ENCODE measurements at regions of chr3 and their contacts with region 1.

Region 1: DNA sequence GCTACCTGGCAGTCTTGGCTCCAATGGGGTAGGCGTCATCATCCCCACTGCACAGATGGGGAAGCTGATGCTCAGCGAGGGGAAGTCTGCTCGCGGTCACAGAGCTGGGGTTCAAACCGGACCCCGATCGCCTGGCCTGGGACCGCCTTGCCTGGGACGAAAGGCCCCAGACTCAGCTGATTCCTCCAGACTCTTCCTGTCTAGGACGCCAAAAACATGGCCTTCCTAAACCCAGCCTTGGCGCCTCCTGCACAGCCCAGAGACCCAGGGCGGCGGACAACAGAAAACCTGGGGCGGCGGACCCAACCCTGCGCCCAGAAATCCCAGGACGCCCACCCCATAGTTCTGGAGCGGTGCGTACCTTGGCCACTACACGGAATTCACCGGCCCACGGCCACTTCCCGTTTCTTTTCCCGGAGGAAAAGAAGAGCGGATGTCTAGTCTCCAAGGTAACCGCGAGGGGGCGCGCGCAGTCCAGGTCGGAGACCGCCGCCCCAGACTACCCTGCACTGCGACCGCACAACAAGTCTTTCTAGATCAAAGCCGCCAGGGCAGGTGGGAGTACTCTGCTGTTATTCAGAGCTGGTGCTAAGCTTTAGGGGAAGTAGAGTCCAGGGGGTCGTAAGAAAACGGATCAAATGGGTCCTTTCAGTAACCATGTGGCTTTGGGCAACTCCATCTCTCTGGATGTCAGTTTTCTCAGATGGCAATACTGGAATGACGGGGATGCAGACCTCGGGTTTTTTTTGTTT is 4.9 kb upstream of the IL17RD start:
- DNase-seq: peak; percentile 87
- H3K4me3 ChIP-seq: peak overlapping the region; percentile 33 to 50 (median 46)
- H3K27ac ChIP-seq: peak overlapping the region in 1 of 4 donors; percentile 20
- H3K4me1 ChIP-seq: peaks cover 0 to 15% (median 5%) of the 10 kb centered on the region in 4 donors
- H3K27me3 ChIP-seq: no peaks in the 10 kb centered on the region
- CTCF ChIP-seq: peak; percentile 63 to 85 (median 78)
- EP300 ChIP-seq: no peak
- POLR2A ChIP-seq: no peak

Region 2: DNA sequence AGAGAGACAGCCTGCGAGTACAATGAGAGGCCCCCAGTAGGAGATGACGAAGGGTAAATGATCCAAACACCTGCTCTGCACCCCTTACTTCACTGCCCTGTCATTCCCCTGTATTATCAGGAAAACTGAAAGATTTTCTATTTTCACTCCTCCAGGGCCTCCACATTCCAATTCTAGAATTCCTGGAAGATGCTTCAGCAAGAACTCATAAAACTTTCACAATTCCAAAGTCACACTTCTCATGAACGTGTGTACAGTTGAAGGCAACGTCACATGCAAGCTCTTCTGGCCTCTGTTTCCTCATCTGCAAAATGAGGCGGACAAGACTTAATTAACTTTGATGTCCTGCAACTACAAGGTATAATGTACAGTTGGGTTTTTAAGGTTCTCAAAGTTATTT is 172.4 kb before region 1 on chr3:
- intact Hi-C with region 1: loop called (anchors 5 kb)
- DNase-seq: no peak
- H3K4me3 ChIP-seq: no peak overlapping the region
- H3K27ac ChIP-seq: peak overlapping the region; percentile 53 to 78 (median 72)
- H3K4me1 ChIP-seq: peaks cover 0 to 45% (median 29%) of the 10 kb centered on the region in 4 donors
- H3K27me3 ChIP-seq: no peaks in the 10 kb centered on the region
- CTCF ChIP-seq: no peak
- EP300 ChIP-seq: no peak
- POLR2A ChIP-seq: no peak

Region 3: DNA sequence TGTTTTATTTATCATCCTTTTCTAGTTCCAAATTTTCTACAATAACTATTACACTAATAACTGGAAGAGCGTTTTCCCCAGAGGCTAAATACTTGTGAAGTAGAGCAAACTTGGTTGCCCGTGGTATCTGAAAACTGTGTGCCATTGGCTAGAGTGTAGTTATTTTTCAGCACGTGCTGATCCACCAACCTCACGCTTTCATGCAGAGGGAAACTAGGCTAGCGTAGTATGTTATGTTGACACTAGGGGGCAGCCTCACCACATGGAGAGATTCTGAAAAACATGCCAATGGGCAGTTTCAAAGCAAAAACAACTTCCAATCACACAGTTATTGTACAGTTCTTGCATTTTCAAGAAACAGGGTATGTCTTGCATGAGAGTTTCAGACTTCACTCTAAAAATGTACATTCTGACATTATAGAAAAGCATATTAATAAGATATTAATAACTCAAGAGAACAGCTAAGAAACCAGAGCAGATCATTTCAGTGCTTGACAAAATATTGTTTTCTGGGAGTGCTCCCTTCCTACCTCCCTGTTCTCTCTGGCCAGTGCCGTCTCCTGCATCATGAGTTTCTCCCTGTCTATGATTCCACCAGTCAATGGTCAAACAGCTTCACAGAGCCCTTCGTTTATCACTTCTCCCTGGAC is 69.9 kb before region 1 on chr3:
- intact Hi-C with region 1: loop called (anchors 2 kb)
- DNase-seq: peak; percentile 85
- H3K4me3 ChIP-seq: no peak overlapping the region
- H3K27ac ChIP-seq: no peak overlapping the region
- H3K4me1 ChIP-seq: peaks cover 0 to 5% (median 2%) of the 10 kb centered on the region in 4 donors
- H3K27me3 ChIP-seq: no peaks in the 10 kb centered on the region
- CTCF ChIP-seq: peak; percentile 86 to 94 (median 88)
- EP300 ChIP-seq: no peak
- POLR2A ChIP-seq: no peak

Region 4: DNA sequence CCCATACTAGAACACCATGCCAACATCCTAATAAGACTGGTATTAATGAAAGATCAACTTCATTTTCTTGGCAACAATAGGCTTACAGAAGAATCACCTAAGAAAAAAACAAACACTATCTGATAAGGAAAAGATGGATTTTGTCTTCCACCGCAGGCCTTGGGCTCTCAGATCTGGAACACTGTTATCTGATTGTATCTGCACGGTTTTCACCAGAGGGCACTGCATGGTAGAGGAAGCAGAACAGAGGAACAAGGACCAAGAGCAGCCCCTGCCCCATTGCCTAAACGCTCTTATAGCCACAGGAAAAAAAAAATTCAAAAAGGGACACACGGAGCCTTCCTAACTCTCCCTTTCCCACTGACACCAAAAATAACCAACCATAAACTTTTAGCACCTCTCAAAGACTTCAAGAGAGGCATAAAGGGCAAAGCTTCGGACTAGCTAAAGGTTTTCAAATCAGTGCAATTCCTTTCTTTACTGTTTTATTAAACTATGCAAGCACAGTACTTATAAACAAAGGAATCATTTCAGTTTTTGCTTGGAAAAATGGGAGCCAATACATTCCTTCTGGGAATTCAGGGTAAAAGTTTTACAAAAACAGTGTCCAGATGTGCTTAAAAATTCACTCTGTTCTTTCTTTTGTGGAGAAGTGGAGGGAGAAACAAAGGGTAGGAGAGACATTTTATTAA is 28.2 kb before region 1 on chr3:
- intact Hi-C with region 1: no loop called
- DNase-seq: no peak
- H3K4me3 ChIP-seq: peak overlapping the region in 2 of 4 donors; percentile 2 to 6
- H3K27ac ChIP-seq: peak overlapping the region; percentile 7 to 58 (median 32)
- H3K4me1 ChIP-seq: peaks cover 0 to 19% (median 3%) of the 10 kb centered on the region in 4 donors
- H3K27me3 ChIP-seq: no peaks in the 10 kb centered on the region
- CTCF ChIP-seq: peak in 1 of 4 experiments; percentile 15
- EP300 ChIP-seq: no peak
- POLR2A ChIP-seq: no peak

Region 5: GRCh38 chr3:57199895-57200297 is 29.8 kb after region 1 on chr3 and contains the start of gene HESX1:
- intact Hi-C with region 1: no loop called
- DNase-seq: no peak
- H3K4me3 ChIP-seq: no peak within 1 kb of the TSS
- H3K27ac ChIP-seq: no peak within 1 kb of the TSS
- H3K4me1 ChIP-seq: no peaks in the 10 kb centered on the region
- H3K27me3 ChIP-seq: peaks cover 0 to 6% (median 0%) of the 10 kb centered on the region in 3 donors
- CTCF ChIP-seq: no peak
- EP300 ChIP-seq: no peak
- POLR2A ChIP-seq: no peak
- total RNA-seq, gene HESX1: 0.82 to 3.6 TPM in 2 of 4 donors, not detected in the others

Region 6: DNA sequence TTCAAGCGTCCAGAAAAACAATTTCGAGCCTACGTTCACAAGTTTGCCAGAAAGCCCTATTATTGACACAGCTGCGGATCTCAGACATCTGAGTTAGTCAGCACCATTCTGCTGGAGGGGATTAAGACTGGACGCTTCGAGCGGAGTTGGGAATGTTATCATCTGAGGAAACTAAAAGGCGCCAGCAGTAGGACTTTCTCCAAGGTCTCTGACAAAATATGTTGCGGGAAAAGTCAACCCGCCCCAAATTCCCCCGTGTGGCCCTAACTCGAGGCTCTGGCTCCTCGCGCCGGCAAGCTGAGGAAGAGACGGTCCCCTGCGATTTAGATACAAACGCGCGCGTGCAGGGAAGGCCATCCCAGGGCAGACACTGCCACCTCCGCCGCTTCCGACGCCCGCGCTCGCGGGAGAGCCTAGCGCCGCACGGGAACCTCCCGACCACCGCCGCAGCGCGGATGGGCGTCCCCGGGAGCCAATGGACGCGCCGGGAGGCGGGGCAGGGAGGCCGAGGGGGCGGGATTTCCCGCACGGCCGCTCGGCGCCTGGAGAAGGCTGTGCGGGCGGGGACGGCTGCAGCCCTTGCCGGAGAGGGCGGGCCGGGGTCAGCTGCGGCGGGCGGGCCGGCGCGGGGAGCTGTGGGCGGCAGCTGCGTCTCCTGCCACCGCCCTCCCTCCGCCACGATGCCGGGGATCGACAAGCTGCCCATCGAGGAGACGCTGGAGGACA is 57.3 kb after region 1 on chr3 and contains the start of gene APPL1:
- intact Hi-C with region 1: loop called (anchors 2 kb)
- DNase-seq: peak; percentile 95
- H3K4me3 ChIP-seq: peak within 1 kb of the TSS; percentile 69 to 88 (median 80)
- H3K27ac ChIP-seq: peak within 1 kb of the TSS; percentile 93 to 98 (median 96)
- H3K4me1 ChIP-seq: peaks cover 0 to 36% (median 26%) of the 10 kb centered on the region in 4 donors
- H3K27me3 ChIP-seq: no peaks in the 10 kb centered on the region
- CTCF ChIP-seq: no peak
- EP300 ChIP-seq: no peak
- POLR2A ChIP-seq: peak; percentile 83 to 86
- total RNA-seq, gene APPL1: 34.9 to 63.7 (median 54.3) TPM

Region 7: DNA sequence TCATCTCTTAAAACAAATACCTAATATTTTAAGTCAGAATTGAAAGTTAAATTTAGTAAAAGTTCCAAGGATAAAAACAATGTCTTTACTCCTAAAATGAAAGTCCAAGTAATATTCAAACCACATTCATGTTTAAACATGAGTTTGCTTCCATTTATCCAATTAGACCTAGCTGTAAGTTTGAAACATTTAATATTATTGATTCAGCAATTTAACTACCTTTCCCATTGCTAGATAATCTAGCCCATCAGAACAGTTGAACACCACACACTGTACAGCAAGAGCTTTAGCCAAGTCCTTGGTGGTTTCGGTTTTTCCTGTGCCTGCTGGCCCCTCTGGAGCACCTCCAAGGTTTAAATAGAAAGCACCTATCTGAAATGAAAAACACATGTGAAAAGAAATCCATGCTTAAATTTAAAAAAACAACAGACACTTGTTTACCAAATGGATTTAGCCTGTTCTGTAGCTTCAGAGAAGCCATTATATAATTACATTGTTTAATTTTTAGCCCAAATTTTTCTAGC is 276.3 kb after region 1 on chr3:
- intact Hi-C with region 1: no loop called
- DNase-seq: no peak
- H3K4me3 ChIP-seq: no peak overlapping the region
- H3K27ac ChIP-seq: no peak overlapping the region
- H3K4me1 ChIP-seq: no peaks in the 10 kb centered on the region
- H3K27me3 ChIP-seq: no peaks in the 10 kb centered on the region
- CTCF ChIP-seq: no peak
- EP300 ChIP-seq: no peak
- POLR2A ChIP-seq: no peak

Region 8: DNA sequence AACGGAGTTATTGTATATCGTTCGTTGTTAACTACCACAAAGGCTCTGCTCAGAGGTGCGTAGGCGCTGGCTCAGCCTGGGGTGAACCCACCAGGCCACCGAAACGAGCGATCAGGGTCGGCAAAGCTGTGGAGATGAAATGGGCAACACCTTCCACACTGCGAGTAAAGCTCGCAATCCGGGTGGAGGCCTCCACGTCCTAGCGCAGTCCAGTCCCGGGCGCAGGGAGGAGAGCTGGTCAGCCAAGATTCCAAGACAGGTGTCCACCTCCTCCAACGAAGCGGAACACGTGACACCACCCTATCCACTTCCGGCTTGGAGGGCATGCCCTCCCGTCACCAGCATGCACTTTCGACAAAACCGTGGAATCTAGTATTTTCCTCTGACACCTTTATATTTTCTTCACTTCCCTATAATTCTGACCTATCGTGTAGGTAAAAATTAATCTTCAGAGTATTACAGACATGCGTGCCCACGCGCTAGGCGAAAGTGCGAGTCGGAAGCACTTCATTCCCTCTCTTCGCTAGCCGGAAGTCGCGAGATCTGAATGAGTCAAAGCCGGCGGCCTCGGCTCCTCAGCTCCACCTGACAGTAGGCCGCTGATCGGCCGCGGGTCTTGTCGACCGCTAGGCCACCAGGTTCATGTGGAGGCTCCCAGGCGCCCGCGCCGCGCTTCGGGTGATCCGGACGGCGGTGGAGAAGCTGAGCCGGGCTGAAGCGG is 385.9 kb after region 1 on chr3 and contains the start of gene PDE12:
- intact Hi-C with region 1: loop called (anchors 10 kb)
- DNase-seq: peak; percentile 92
- H3K4me3 ChIP-seq: peak within 1 kb of the TSS; percentile 80 to 93 (median 90)
- H3K27ac ChIP-seq: peak within 1 kb of the TSS; percentile 91 to 98 (median 94)
- H3K4me1 ChIP-seq: peaks cover 0 to 39% (median 30%) of the 10 kb centered on the region in 4 donors
- H3K27me3 ChIP-seq: no peaks in the 10 kb centered on the region
- CTCF ChIP-seq: no peak
- EP300 ChIP-seq: no peak
- POLR2A ChIP-seq: peak; percentile 62 to 83
- total RNA-seq, gene PDE12: 11.4 to 17.9 (median 12.4) TPM

Region 9: GRCh38 chr3:57597122-57597923 is 427.3 kb after region 1 on chr3 and contains the start of gene ARF4:
- intact Hi-C with region 1: loop called (anchors 5 kb)
- DNase-seq: peak; percentile 100
- H3K4me3 ChIP-seq: peak within 1 kb of the TSS; percentile 77 to 85 (median 79)
- H3K27ac ChIP-seq: peak within 1 kb of the TSS; percentile 94 to 99 (median 98)
- H3K4me1 ChIP-seq: peaks cover 0 to 50% (median 45%) of the 10 kb centered on the region in 4 donors
- H3K27me3 ChIP-seq: no peaks in the 10 kb centered on the region
- CTCF ChIP-seq: no peak
- EP300 ChIP-seq: peak in 2 of 4 donors; percentile 58 to 86
- POLR2A ChIP-seq: peak; percentile 99
- total RNA-seq, gene ARF4: 88.1 to 96.9 (median 89.3) TPM